ENCODE measurements at regions of chr6 and their contacts with region 1.

Region 1: DNA sequence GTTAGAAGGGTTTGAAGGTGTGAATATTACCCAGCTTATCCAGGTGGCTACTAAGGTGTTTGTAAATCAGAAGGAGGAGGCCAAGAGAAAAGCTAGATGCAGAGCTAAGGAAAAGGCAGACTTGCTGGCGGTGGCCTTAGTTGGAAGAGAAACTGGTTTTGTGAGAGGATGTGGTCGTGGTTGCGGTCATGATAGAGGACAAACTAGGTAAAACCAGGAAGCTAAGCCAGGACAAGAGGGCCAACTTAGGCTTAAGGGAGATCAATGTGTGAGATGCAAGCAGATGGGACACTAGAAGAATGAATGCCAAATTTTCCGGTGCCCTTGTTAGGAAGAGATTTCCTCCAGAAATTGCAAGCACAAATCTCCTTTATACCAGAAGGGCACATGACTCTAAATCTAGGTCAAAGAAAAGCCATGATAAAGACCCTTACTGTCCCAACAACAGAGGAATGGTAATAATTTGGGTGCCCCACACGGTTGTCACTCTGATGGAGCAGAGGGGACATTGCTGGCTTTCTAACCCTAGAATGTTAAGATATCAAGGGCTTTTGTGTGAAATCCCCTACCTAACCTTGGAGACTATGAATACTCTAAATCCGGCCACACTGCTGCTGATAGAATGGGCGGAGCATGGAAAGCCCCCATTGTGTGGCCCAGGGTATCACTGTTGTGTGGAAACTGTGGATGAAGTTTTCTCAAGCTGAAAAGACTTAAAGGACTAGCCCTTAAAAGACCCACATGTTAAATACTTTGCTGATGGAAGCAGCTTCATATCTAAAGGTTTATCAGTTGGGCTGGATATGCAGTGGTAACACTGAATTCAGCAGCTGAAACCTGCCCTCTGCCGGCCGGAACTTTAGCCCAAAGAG is 7.8 kb downstream of the IL22RA2 start:
- DNase-seq: peak; percentile 24
- CTCF ChIP-seq: peak; percentile 71

Region 2: DNA sequence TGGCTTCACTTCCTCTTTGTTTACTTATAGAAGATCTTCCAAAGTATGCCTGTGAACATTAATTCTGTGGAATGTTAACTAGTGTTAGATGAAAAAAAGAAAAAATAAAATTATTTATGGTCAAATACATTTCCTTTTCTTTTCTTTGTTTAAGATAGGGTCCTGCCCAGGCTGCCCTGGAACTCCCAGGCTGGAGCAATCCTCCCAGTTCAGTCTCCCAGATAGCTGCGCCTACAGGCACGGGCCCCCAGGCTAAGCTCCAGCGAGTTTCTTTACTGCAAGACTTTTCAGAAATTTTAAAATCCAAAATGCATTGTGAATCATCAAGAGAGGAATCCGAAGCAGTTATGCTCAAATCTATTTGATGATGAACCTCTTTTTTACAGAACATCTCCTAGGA is 81.5 kb before region 1 on chr6:
- CTCF ChIA-PET with region 1: interaction called, 22 read pairs
- POLR2A ChIA-PET with region 1: no interaction called
- DNase-seq: no peak
- CTCF ChIP-seq: no peak

Region 3: DNA sequence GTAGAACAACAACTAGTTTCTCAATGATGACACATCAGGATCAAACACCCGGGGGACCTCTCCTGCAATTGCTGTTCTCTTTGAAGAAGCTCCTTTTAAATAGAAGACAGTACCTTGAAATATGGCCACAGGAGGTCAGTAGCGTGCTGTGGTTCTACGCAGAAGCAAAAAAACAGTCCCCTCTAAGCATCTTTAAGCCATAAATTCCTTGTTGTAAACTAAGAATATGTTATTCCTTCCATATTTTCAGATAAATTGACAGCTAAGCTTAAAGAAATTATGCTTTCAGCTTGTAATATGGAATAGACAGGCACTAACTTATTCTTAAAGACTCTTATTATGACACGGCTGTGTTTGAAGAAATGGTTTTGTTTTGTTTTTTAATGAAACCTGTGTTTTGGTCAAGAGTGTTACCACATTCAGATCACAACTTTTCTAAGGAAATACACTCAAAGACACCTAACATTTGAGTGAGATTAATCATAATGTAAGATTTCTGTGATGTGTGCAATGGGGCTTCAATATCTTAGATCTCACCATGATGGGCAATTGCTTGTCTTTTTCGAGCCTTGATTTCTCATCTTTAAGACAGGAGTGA is 71.1 kb before region 1 on chr6:
- CTCF ChIA-PET with region 1: interaction called, 155 read pairs
- POLR2A ChIA-PET with region 1: no interaction called
- DNase-seq: peak; percentile 43
- CTCF ChIP-seq: peak; percentile 66

Region 4: GRCh38 chr6:137112067-137112355 is 53.6 kb before region 1 on chr6:
- CTCF ChIA-PET with region 1: interaction called, 12 read pairs
- POLR2A ChIA-PET with region 1: no interaction called
- DNase-seq: no peak
- CTCF ChIP-seq: no peak

Region 5: GRCh38 chr6:137136065-137136464 is 29.5 kb before region 1 on chr6:
- CTCF ChIA-PET with region 1: interaction called, 12 read pairs
- POLR2A ChIA-PET with region 1: no interaction called
- DNase-seq: no peak
- CTCF ChIP-seq: no peak

Measured in GM10248 (cell line).